ENCODE measurements at regions of chr20 and their contacts with region 1.

Region 1: DNA sequence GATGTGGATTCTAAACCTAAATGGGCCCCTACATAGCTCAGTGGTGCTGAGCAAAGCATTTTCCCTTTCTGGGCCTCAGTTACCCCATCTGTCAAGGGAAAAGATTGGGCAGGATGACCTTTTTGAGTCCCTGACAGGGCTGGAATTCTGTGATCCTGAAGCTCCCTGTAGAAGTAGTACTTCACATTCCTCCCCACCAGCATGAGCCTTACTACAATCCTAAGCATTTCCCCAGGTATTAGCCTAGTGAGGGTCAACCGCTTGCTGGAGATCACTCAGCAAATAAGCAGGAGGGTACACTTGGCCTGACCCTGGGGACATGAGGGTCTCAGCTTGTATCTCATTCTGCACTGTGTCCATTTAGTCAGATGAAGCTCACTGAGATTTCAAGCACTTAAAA is 13.4 kb downstream of the NDRG3 start:
- DNase-seq: no peak
- H3K4me3 ChIP-seq: no peak overlapping the region
- H3K27ac ChIP-seq: no peak overlapping the region
- H3K4me1 ChIP-seq: peaks cover 0 to 25% (median 2%) of the 10 kb centered on the region in 4 donors
- H3K27me3 ChIP-seq: no peaks in the 10 kb centered on the region
- CTCF ChIP-seq: no peak
- EP300 ChIP-seq: no peak
- POLR2A ChIP-seq: no peak

Region 2: DNA sequence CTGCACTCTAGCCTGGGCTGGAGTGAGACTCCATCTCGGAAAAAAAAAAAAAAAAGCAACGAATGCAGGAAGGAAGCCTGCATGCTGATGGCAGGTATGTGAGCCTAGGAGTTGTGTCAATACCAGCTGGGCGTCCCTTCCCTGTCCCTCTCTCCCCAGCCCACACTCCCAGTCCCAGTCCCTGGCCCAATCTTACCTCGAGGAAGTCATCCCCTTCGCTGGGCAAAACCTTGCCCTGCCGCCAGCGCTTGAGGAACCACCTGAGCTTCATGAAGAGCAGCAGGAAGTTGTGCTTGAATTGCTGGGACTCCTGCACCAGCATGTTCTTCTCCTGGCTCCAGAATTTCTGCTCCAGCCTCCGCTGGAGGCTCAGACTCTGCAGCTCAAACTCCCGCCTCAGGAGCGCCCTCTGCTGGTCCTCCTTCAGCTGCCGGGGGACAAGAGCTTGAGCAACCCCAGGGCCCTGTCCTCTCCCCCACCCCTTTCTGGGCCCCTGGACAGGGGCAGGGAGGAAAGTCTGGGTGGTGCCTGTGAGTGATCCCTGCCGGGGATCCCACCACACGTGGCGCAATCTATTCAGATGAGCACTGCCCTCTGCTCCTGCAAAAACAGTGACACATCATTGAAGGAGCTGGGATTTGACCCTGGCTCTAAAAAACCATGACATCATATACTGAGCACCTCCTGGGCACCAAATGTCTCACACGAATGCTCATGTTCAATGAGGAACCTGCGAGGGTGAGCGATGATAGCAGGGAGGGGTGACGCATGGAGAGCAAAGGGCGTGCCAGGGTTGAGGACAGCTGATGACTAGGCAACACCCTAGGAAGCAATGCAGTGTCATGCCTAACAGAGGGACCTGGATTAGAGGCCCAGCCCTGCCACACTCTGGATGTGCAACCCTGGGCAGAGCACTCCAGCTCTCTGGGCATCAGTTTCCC is 76.1 kb after region 1 on chr20:
- in situ Hi-C with region 1: no loop called
- intact Hi-C with region 1: no loop called
- DNase-seq: peak; percentile 88
- H3K4me3 ChIP-seq: no peak overlapping the region
- H3K27ac ChIP-seq: peak overlapping the region; percentile 52 to 68 (median 64)
- H3K4me1 ChIP-seq: peaks cover 4 to 20% (median 12%) of the 10 kb centered on the region in 4 donors
- H3K27me3 ChIP-seq: no peaks in the 10 kb centered on the region
- CTCF ChIP-seq: peak; percentile 73 to 81 (median 79)
- EP300 ChIP-seq: no peak
- POLR2A ChIP-seq: no peak

Region 3: GRCh38 chr20:37758332-37758731 is 1025.9 kb after region 1 on chr20:
- in situ Hi-C with region 1: no loop called
- intact Hi-C with region 1: loop called (anchors 5 kb)
- DNase-seq: no peak
- H3K4me3 ChIP-seq: no peak overlapping the region
- H3K27ac ChIP-seq: no peak overlapping the region
- H3K4me1 ChIP-seq: no peaks in the 10 kb centered on the region
- H3K27me3 ChIP-seq: no peaks in the 10 kb centered on the region
- CTCF ChIP-seq: no peak
- EP300 ChIP-seq: no peak
- POLR2A ChIP-seq: no peak